Psoas muscle (tissue), 8 donors: ENCODE measurements at regions of chr3 and their contacts with region 1.

Region 1: GRCh38 chr3:113626503-113627371 is 69.7 kb downstream of the USF3 start:
- DNase-seq: peak; percentile 30 to 64
- ATAC-seq: peak; percentile 71 to 92 (median 82)
- H3K4me3 ChIP-seq: peak overlapping the region; percentile 23
- H3K27ac ChIP-seq: peak overlapping the region; percentile 25
- H3K4me1 ChIP-seq: peaks cover 27% of the 10 kb centered on the region
- H3K27me3 ChIP-seq: no peaks in the 10 kb centered on the region
- CTCF ChIP-seq: peak; percentile 92

Region 2: DNA sequence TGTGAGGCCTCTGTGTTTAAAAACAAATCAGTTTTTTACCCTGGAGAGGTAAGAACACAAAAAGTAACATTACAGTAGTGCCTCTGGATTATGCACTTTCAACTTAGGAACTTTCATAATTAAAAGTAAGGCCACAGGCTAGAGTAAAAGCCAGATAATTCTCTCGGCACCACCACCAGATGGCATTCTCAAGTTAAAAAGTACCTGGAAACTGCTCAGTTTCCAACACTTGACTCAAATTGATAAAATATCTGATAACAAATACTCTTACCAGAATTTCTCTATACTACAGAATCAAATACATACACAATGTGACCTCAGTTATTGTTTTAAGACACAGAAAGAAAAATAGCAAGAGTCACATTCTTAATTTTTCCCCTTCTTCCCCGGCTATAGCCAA is 131.7 kb before region 1 on chr3:
- intact Hi-C with region 1: loop called (anchors 1 to 2 kb)
- DNase-seq: no peak
- ATAC-seq: peak; percentile 61 to 94 (median 66)
- H3K4me3 ChIP-seq: no peak overlapping the region
- H3K27ac ChIP-seq: no peak overlapping the region
- H3K4me1 ChIP-seq: no peaks in the 10 kb centered on the region
- H3K27me3 ChIP-seq: no peaks in the 10 kb centered on the region
- CTCF ChIP-seq: peak; percentile 61

Region 3: DNA sequence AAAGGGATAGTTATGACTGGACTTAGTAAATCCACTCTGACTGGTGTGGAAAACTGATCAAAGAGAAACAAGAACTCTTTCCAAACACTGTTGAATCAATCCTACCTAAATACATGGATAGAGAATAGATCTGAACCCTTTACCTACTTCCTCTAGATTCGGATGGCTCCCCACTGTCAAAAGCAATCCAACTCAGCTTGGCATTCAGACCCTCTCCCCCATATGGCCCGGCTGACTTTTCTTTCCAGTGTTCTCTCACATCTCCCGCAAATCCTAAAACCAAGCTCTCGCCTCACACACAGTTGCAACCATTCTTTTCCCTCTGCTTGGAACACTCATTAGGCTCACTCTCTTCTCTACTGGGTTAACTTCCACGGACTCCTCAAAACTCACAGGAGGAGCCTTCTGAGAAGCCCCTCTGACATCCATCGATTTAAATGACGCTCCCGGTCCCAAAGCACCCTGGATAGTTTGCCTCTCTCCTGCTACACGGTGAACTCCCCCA is 112.4 kb before region 1 on chr3:
- intact Hi-C with region 1: loop called in 1 of 2 experiments (anchors 5 kb)
- DNase-seq: no peak
- ATAC-seq: peak in 3 of 4 donors; percentile 3 to 21 (median 10)
- H3K4me3 ChIP-seq: peak overlapping the region; percentile 99
- H3K27ac ChIP-seq: peak overlapping the region; percentile 78
- H3K4me1 ChIP-seq: peaks cover 10% of the 10 kb centered on the region
- H3K27me3 ChIP-seq: no peaks in the 10 kb centered on the region
- CTCF ChIP-seq: no peak

Region 4: GRCh38 chr3:113736548-113737089 is 109.9 kb after region 1 on chr3:
- intact Hi-C with region 1: loop called (anchors 5 kb)
- DNase-seq: no peak
- ATAC-seq: peak; percentile 48 to 67 (median 61)
- H3K4me3 ChIP-seq: peak overlapping the region; percentile 16
- H3K27ac ChIP-seq: peak overlapping the region; percentile 34
- H3K4me1 ChIP-seq: peaks cover 87% of the 10 kb centered on the region
- H3K27me3 ChIP-seq: no peaks in the 10 kb centered on the region
- CTCF ChIP-seq: peak; percentile 68